Naive thymus-derived CD4-positive, alpha-beta T cell (primary cell): ENCODE measurements at regions of chr19 and their contacts with region 1.

Region 1: DNA sequence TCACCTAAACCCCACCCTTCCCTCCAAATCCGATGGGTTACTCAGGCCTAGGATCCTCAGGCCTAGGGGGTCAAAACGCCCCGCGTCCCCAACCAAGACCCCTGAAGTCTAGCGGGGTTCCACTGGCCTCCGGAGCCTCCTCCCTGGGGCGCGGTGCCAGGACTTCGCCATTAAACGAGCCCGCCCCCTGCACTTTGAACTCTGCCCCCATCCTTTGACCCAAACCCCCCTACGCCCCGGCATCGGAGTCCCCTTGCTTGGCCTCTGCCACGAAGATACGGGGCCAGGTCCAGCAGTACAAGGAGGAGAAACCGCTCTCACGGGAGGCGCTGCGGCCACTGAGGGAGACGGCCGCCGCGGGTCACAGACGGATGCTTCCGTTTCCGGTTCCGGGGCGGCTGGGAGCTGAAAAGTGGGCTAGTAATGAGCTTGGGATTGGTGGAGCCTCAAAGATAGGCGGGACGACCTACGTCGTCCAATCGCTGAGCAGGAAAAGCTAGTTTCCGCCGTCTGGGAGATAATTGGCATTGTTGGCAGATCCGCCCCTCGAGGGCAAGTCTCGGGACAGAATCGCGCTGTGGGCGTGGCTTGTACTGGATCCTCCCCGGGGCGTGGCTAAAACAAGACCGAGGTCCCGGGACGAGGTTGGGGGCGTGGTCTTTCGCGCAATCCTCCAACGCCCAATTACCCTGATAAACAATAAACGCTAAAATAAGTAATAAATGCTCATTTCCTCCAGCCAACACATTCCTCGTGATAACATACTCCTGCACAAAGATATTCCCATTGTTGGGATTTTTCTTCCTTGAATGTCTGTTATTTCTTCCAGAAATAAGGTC is 5.7 kb upstream of the ZNF77 start:
- DNase-seq: peak; percentile 98 to 100 (median 100)
- ATAC-seq: peak; percentile 96
- H3K4me3 ChIP-seq: peak overlapping the region; percentile 93
- H3K4me3 Mint-ChIP-seq: peak overlapping the region; percentile 86 to 98 (median 96)
- H3K27ac ChIP-seq: peak overlapping the region; percentile 87
- H3K27ac Mint-ChIP-seq: peak overlapping the region; percentile 91 to 100 (median 97)
- H3K4me1 ChIP-seq: peaks cover 9 to 11% of the 10 kb centered on the region in 2 donors
- H3K4me1 Mint-ChIP-seq: peaks cover 15 to 34% (median 29%) of the 10 kb centered on the region in 7 donors
- H3K27me3 ChIP-seq: no peaks in the 10 kb centered on the region
- H3K27me3 Mint-ChIP-seq: no peaks in the 10 kb centered on the region

Region 2: GRCh38 chr19:2427429-2428320 is 522.8 kb before region 1 on chr19 and contains the start of gene TIMM13:
- CTCF ChIA-PET with region 1: no interaction called
- POLR2A ChIA-PET with region 1: no interaction called
- intact Hi-C with region 1: loop called in 1 of 2 experiments (anchors 2 kb)
- DNase-seq: peak; percentile 96 to 99 (median 98)
- ATAC-seq: peak; percentile 96
- H3K4me3 ChIP-seq: peak within 1 kb of the TSS; percentile 97
- H3K4me3 Mint-ChIP-seq: peak within 1 kb of the TSS; percentile 89 to 98 (median 95)
- H3K27ac ChIP-seq: peak within 1 kb of the TSS; percentile 91
- H3K27ac Mint-ChIP-seq: peak within 1 kb of the TSS; percentile 93 to 99 (median 97)
- H3K4me1 ChIP-seq: peaks cover 11 to 16% of the 10 kb centered on the region in 2 donors
- H3K4me1 Mint-ChIP-seq: peaks cover 0 to 16% (median 14%) of the 10 kb centered on the region in 7 donors
- H3K27me3 ChIP-seq: no peaks in the 10 kb centered on the region
- H3K27me3 Mint-ChIP-seq: peaks cover 0 to 2% (median 0%) of the 10 kb centered on the region in 5 donors
- total RNA-seq, gene TIMM13: 31.3 to 70.8 (median 35.4) TPM

Region 3: DNA sequence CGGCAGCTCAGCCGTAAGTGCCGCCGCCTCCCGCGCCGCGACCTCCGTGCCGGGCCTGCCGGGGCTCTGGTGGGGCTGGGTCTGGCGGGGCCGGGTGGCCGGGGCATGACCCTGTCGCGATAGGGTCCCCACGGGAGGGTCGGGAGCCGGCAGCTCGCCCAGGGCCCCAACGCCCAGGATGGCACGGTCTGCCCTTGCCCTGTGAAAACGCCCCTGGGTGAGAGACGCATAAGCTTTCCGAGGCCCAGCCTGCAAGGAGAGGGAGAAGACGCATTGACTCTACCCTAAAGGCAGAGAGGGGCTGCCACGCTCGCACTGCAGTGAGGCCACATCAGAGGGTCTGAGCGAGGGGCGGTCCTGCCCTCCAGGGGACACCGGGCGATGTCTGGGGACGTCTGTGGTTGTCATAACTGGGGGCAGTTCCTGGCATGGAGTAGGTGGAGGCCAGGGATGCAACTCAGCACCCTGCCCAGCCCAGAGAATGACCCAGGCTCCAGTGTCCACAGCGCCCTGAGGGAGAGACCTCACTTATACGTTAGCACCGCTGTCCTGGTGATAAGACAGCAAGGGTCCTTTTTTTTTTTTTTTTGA is 130.3 kb before region 1 on chr19:
- CTCF ChIA-PET with region 1: no interaction called
- POLR2A ChIA-PET with region 1: no interaction called
- intact Hi-C with region 1: loop called in 1 of 2 experiments (anchors 1 kb)
- DNase-seq: no peak
- ATAC-seq: no peak
- H3K4me3 ChIP-seq: peak overlapping the region; percentile 79
- H3K4me3 Mint-ChIP-seq: peak overlapping the region; percentile 79 to 90 (median 86)
- H3K27ac ChIP-seq: peak overlapping the region; percentile 76
- H3K27ac Mint-ChIP-seq: peak overlapping the region in 5 of 9 donors; percentile 22 to 80 (median 52)
- H3K4me1 ChIP-seq: peaks cover 3 to 4% of the 10 kb centered on the region in 2 donors
- H3K4me1 Mint-ChIP-seq: peaks cover 3 to 19% (median 6%) of the 10 kb centered on the region in 7 donors
- H3K27me3 ChIP-seq: no peaks in the 10 kb centered on the region
- H3K27me3 Mint-ChIP-seq: no peaks in the 10 kb centered on the region

Region 4: DNA sequence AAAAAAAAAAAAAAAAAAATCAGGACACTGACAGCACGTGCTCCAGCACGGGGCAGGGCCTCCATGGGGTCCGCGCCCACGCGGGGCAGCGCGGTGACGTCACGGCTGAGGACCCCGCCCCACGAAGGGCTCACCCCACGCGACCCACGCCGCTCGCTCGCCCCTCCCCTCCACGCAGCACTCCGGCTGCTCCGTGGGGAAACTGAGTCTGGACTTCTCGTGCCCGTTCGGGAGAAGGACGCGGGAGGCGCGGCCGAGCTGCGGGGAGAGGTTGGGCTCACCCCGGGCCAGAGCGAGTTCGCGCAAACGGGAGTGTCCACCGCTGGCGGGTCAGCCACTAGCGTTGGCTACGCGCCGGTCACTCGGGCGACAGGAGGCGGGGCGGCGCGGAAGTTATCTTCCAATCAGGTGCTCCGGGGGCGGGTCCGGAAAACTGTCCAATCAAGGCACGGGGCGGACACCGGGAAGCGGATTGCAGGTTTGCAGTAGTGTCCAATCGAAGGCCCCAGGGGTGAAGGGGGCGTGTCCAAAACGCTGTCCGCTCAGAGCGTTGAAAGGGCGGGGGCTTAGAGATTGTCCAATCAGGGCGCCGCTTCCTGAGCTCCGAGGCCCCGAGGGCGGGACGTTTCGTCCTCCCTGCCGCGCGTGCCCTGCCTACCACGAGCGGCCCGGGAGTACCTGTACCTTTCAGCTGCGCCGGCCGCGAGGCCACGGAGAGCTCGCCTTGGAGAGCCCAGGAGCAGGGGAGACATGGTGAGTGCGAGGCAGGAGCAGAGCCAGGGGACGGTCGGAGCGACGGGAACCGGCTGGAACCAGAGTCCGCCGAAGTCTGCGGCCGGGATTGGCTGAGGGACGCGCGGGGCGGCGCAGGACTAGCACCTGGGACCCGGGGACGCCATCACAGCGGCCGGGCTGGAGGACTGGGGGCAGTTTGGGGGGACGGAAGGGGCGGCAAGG is 49.9 kb before region 1 on chr19 and contains the start of gene ZNF57:
- CTCF ChIA-PET with region 1: no interaction called
- POLR2A ChIA-PET with region 1: interaction called, 4 read pairs
- intact Hi-C with region 1: loop called (anchors 1 kb)
- DNase-seq: peak; percentile 83 to 98 (median 96)
- ATAC-seq: peak; percentile 99
- H3K4me3 ChIP-seq: peak within 1 kb of the TSS; percentile 79
- H3K4me3 Mint-ChIP-seq: peak within 1 kb of the TSS; percentile 88 to 99 (median 96)
- H3K27ac ChIP-seq: peak within 1 kb of the TSS; percentile 63
- H3K27ac Mint-ChIP-seq: peak within 1 kb of the TSS; percentile 55 to 91 (median 85)
- H3K4me1 ChIP-seq: peaks cover 0 to 4% of the 10 kb centered on the region in 2 donors
- H3K4me1 Mint-ChIP-seq: peaks cover 11 to 28% (median 21%) of the 10 kb centered on the region in 7 donors
- H3K27me3 ChIP-seq: no peaks in the 10 kb centered on the region
- H3K27me3 Mint-ChIP-seq: no peaks in the 10 kb centered on the region
- total RNA-seq, gene ZNF57: 1.7 to 5.0 (median 2.2) TPM

Region 5: GRCh38 chr19:3035542-3036118 is 85.1 kb after region 1 on chr19:
- CTCF ChIA-PET with region 1: interaction called, 6 read pairs
- POLR2A ChIA-PET with region 1: interaction called, 16 read pairs
- intact Hi-C with region 1: loop called in 1 of 2 experiments (anchors 1 kb)
- DNase-seq: peak; percentile 77 to 97 (median 95)
- ATAC-seq: peak; percentile 95
- H3K4me3 ChIP-seq: peak overlapping the region; percentile 95
- H3K4me3 Mint-ChIP-seq: peak overlapping the region; percentile 88 to 97 (median 94)
- H3K27ac ChIP-seq: peak overlapping the region; percentile 76
- H3K27ac Mint-ChIP-seq: peak overlapping the region; percentile 92 to 99 (median 98)
- H3K4me1 ChIP-seq: peaks cover 11 to 16% of the 10 kb centered on the region in 2 donors
- H3K4me1 Mint-ChIP-seq: peaks cover 21 to 44% (median 31%) of the 10 kb centered on the region in 7 donors
- H3K27me3 ChIP-seq: no peaks in the 10 kb centered on the region
- H3K27me3 Mint-ChIP-seq: peaks cover 0 to 41% (median 0%) of the 10 kb centered on the region in 5 donors

Region 6: DNA sequence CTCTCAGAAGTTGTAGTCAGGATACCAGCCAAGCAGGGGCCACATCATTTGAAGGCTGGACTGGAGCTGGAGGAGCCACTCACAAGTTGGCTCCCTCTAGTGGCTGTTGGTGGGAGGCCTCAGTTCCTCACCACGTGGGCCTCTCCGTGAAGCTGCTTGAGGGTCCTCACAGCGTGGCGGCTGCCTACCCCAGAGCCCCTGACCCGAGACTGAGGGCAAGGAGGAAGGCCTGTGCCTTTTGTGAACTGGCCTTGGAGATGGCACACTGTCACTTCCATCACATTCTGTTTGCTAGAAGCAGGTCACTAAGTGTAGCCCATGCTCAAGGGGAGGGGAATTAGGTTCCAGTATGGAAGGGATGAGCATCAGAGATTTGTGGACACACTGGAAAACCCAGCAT is 158.3 kb after region 1 on chr19:
- CTCF ChIA-PET with region 1: interaction called, 32 read pairs
- POLR2A ChIA-PET with region 1: interaction called, 8 read pairs
- intact Hi-C with region 1: loop called (anchors 1 kb)
- DNase-seq: peak in 8 of 9 donors; percentile 51 to 72 (median 65)
- ATAC-seq: peak; percentile 76
- H3K4me3 ChIP-seq: no peak overlapping the region
- H3K4me3 Mint-ChIP-seq: peak overlapping the region in 1 of 10 donors; percentile 46
- H3K27ac ChIP-seq: no peak overlapping the region
- H3K27ac Mint-ChIP-seq: peak overlapping the region in 5 of 9 donors; percentile 43 to 70 (median 57)
- H3K4me1 ChIP-seq: peaks cover 8% of the 10 kb centered on the region in 2 donors
- H3K4me1 Mint-ChIP-seq: peaks cover 4 to 15% (median 11%) of the 10 kb centered on the region in 7 donors
- H3K27me3 ChIP-seq: no peaks in the 10 kb centered on the region
- H3K27me3 Mint-ChIP-seq: peaks cover 0 to 2% (median 0%) of the 10 kb centered on the region in 5 donors

Region 7: DNA sequence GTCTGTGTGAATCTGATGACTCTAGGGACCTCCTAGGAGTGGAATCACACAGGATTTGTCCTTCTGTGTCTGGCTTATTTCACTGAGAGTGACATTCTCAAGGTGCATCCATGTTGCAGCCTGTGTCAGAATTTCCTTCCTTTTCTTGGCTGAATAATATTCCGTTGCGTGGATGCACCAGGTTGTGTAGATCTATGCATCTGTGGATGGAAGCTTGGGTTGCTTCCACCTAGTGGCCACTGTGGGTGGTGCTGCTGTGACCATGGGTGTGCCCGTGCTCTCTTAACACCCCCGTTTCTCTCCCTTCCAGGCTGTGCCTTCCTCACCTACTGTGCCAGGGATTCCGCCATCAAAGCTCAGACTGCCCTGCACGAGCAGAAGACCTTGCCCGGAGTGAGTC is 300.2 kb after region 1 on chr19:
- CTCF ChIA-PET with region 1: no interaction called
- POLR2A ChIA-PET with region 1: no interaction called
- intact Hi-C with region 1: loop called in 1 of 2 experiments (anchors 5 kb)
- DNase-seq: peak in 5 of 9 donors; percentile 23 to 35 (median 28)
- ATAC-seq: peak; percentile 73
- H3K4me3 ChIP-seq: no peak overlapping the region
- H3K4me3 Mint-ChIP-seq: no peak overlapping the region
- H3K27ac ChIP-seq: no peak overlapping the region
- H3K27ac Mint-ChIP-seq: no peak overlapping the region
- H3K4me1 ChIP-seq: no peaks in the 10 kb centered on the region
- H3K4me1 Mint-ChIP-seq: no peaks in the 10 kb centered on the region
- H3K27me3 ChIP-seq: no peaks in the 10 kb centered on the region
- H3K27me3 Mint-ChIP-seq: peaks cover 0 to 23% (median 16%) of the 10 kb centered on the region in 5 donors